Psoas muscle (tissue), 8 donors: ENCODE measurements at regions of chr21 and their contacts with region 1.

Region 1: GRCh38 chr21:19065146-19065545 is 661.6 kb upstream of the TMPRSS15 start:
- DNase-seq: no peak
- ATAC-seq: no peak
- H3K4me3 ChIP-seq: no peak overlapping the region
- H3K27ac ChIP-seq: no peak overlapping the region
- H3K4me1 ChIP-seq: no peaks in the 10 kb centered on the region
- H3K27me3 ChIP-seq: no peaks in the 10 kb centered on the region
- CTCF ChIP-seq: no peak

Region 2: GRCh38 chr21:18987520-18988026 is 77.6 kb before region 1 on chr21:
- intact Hi-C with region 1: no loop called
- DNase-seq: no peak
- ATAC-seq: no peak
- H3K4me3 ChIP-seq: no peak overlapping the region
- H3K27ac ChIP-seq: no peak overlapping the region
- H3K4me1 ChIP-seq: no peaks in the 10 kb centered on the region
- H3K27me3 ChIP-seq: no peaks in the 10 kb centered on the region
- CTCF ChIP-seq: no peak

Region 3: DNA sequence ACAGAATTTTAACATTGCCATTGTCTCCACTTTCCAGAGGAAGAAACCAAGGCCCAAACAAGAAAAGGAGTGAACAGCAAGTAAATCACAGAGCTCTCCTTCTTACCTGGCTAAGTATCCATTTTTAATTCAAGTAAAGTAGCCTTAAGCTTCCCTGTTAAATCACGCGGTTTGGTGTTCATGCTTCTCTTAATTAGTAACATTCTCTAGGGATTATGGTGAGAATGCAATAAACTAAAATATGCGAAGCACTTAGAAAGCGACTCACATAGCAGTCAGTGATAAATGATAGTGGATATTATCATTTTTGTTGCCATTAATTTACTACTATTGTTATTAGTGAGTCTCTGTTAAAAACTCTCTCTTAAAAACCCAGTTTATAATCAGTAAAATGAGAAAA is 31.1 kb before region 1 on chr21:
- intact Hi-C with region 1: no loop called
- DNase-seq: no peak
- ATAC-seq: no peak
- H3K4me3 ChIP-seq: no peak overlapping the region
- H3K27ac ChIP-seq: no peak overlapping the region
- H3K4me1 ChIP-seq: no peaks in the 10 kb centered on the region
- H3K27me3 ChIP-seq: no peaks in the 10 kb centered on the region
- CTCF ChIP-seq: no peak

Region 4: GRCh38 chr21:19049567-19049966 is 15.6 kb before region 1 on chr21:
- intact Hi-C with region 1: loop called in 1 of 2 experiments (anchors 1 kb)
- DNase-seq: no peak
- ATAC-seq: no peak
- H3K4me3 ChIP-seq: no peak overlapping the region
- H3K27ac ChIP-seq: no peak overlapping the region
- H3K4me1 ChIP-seq: no peaks in the 10 kb centered on the region
- H3K27me3 ChIP-seq: no peaks in the 10 kb centered on the region
- CTCF ChIP-seq: no peak

Region 5: DNA sequence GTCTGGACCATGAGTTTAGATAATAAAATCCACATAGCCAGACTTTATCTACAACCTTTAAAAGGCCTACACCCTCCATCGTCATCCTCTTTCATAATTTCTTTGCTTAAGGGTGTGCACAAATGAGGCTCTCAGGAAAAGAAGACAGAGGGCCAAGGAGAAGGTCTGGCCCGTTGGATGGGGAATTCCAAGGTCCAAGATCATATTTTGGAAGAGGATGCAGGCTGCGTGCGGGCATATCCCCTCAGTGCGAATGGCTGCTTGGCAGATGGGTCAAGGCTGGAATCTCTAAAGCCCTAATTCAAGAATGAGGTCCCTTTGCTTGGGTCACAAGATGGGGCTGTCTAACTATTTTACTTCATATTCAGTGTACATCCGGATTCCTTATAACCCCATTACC is 1150.8 kb after region 1 on chr21:
- intact Hi-C with region 1: no loop called
- DNase-seq: no peak
- ATAC-seq: no peak
- H3K4me3 ChIP-seq: no peak overlapping the region
- H3K27ac ChIP-seq: no peak overlapping the region
- H3K4me1 ChIP-seq: no peaks in the 10 kb centered on the region
- H3K27me3 ChIP-seq: no peaks in the 10 kb centered on the region
- CTCF ChIP-seq: no peak